ENCODE measurements at regions of chr21 and their contacts with region 1.

Region 1: GRCh38 chr21:44011980-44012527 is at the start of gene TRAPPC10:
- DNase-seq: peak; percentile 84
- H3K4me3 Mint-ChIP-seq: peak within 1 kb of the TSS; percentile 85
- H3K27ac Mint-ChIP-seq: peak within 1 kb of the TSS; percentile 90
- H3K4me1 Mint-ChIP-seq: peaks cover 44% of the 10 kb centered on the region
- H3K27me3 Mint-ChIP-seq: no peaks in the 10 kb centered on the region
- total RNA-seq, gene TRAPPC10: 37.1 to 38.6 TPM

Region 2: DNA sequence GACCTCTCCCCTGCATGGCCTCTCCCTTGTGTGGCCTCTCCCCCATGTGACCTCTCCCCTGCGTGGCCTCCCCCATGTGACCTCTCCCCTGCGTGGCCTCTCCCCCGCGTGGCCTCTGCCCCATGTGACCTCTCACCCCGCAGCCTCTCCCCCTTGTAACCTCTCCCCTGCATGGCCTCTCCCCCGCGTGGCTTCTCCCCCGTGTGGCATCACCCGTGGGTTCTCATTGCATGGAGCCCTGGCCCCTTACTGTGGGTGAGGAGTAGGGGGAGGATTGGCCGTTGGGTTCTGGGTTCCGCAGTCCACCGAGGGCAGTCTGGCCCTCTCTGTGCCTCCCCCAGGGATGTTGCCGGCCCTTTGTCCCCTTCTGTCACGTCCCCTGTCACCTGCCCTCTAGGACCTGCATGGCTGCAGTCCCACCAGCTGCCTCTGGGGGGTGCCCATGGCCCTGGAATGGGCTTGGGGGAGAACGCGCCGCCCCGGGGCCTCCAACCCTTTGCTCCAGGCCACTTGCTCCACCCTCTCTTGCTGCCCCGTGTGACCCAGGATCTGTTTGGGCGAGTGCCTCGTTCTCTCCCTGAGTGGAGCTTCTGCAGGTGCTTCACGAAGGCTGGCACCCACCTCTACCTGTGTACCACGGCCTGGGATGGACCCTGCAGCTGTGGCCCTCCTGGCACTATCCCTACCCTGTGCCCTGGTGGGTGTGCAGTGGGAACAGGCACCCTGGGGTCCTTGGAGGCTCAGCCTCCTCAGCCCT is 201.4 kb before region 1 on chr21:
- CTCF ChIA-PET with region 1: no interaction called
- intact Hi-C with region 1: no loop called
- DNase-seq: peak; percentile 95
- H3K4me3 Mint-ChIP-seq: no peak overlapping the region
- H3K27ac Mint-ChIP-seq: no peak overlapping the region
- H3K4me1 Mint-ChIP-seq: peaks cover 7% of the 10 kb centered on the region
- H3K27me3 Mint-ChIP-seq: no peaks in the 10 kb centered on the region

Region 3: GRCh38 chr21:43866260-43866629 is 145.8 kb before region 1 on chr21:
- CTCF ChIA-PET with region 1: no interaction called
- intact Hi-C with region 1: loop called (anchors 5 kb)
- DNase-seq: peak; percentile 75
- H3K4me3 Mint-ChIP-seq: peak overlapping the region; percentile 75
- H3K27ac Mint-ChIP-seq: peak overlapping the region; percentile 89
- H3K4me1 Mint-ChIP-seq: peaks cover 46% of the 10 kb centered on the region
- H3K27me3 Mint-ChIP-seq: no peaks in the 10 kb centered on the region

Region 4: GRCh38 chr21:44065428-44065827 is 53.4 kb after region 1 on chr21:
- CTCF ChIA-PET with region 1: interaction called, 3 read pairs
- intact Hi-C with region 1: loop called (anchors 1 kb)
- DNase-seq: peak; percentile 82
- H3K4me3 Mint-ChIP-seq: peak overlapping the region; percentile 64
- H3K27ac Mint-ChIP-seq: peak overlapping the region; percentile 94
- H3K4me1 Mint-ChIP-seq: peaks cover 32% of the 10 kb centered on the region
- H3K27me3 Mint-ChIP-seq: no peaks in the 10 kb centered on the region

Region 5: GRCh38 chr21:44083631-44084291 is 71.7 kb after region 1 on chr21:
- CTCF ChIA-PET with region 1: interaction called, 14 read pairs
- intact Hi-C with region 1: loop called (anchors 2 kb)
- DNase-seq: peak; percentile 83
- H3K4me3 Mint-ChIP-seq: peak overlapping the region; percentile 58
- H3K27ac Mint-ChIP-seq: peak overlapping the region; percentile 97
- H3K4me1 Mint-ChIP-seq: peaks cover 84% of the 10 kb centered on the region
- H3K27me3 Mint-ChIP-seq: no peaks in the 10 kb centered on the region

Region 6: GRCh38 chr21:44299458-44300261 is 287.6 kb after region 1 on chr21 and contains the start of gene PFKL:
- CTCF ChIA-PET with region 1: interaction called, 6 read pairs
- intact Hi-C with region 1: loop called (anchors 5 kb)
- DNase-seq: peak; percentile 64
- H3K4me3 Mint-ChIP-seq: peak within 1 kb of the TSS; percentile 78
- H3K27ac Mint-ChIP-seq: peak within 1 kb of the TSS; percentile 87
- H3K4me1 Mint-ChIP-seq: peaks cover 54% of the 10 kb centered on the region
- H3K27me3 Mint-ChIP-seq: no peaks in the 10 kb centered on the region
- total RNA-seq, gene PFKL: 166 to 171 TPM

Region 7: DNA sequence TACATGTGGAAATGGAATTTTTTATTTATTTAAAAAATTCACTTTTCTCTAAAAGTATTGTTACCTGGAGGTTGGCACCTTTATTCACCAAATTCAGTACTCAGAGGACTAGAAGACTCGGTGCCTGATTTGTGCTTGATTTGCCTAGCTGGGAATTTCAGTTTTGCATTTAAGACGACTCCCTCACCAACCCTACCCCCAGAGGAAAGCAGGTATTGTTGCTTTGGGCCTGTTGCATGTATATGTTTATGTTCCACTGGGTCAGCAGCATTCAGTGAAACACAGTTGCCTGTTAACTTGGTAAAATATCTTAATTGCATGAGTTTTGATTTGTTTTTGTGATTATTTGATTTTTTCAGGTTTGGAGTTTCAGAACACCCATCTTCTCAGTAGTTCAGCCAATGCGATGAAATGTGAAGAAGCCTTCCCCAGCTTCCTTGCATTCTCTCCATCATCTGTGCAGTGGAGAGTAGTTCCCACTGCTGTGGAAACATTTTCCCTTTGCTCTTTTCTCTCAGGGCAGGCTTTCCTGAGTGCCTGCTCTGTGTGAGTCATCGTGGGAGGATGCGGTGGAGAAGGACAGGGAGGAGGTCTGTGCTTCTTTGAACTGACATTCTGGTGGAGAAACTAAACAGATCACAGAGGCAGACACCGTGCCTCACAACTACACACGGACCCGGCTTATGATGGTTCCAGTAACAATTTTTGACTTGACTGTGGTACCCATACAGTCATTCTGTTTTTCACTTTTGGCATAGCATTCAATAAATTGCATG is 1068.8 kb after region 1 on chr21:
- CTCF ChIA-PET with region 1: no interaction called
- intact Hi-C with region 1: loop called (anchors 10 kb)
- DNase-seq: peak; percentile 64
- H3K4me3 Mint-ChIP-seq: no peak overlapping the region
- H3K27ac Mint-ChIP-seq: peak overlapping the region; percentile 81
- H3K4me1 Mint-ChIP-seq: peaks cover 98% of the 10 kb centered on the region
- H3K27me3 Mint-ChIP-seq: no peaks in the 10 kb centered on the region